CD4-positive, alpha-beta memory T cell (primary cell): ENCODE measurements at regions of chr2 and their contacts with region 1.

Region 1: GRCh38 chr2:189762551-189763298 is at the start of gene OSGEPL1:
- DNase-seq: peak; percentile 89 to 98 (median 91)
- H3K4me3 ChIP-seq: peak within 1 kb of the TSS; percentile 87 to 94
- H3K4me3 Mint-ChIP-seq: peak within 1 kb of the TSS; percentile 90 to 99 (median 95)
- H3K27ac ChIP-seq: peak within 1 kb of the TSS; percentile 88
- H3K27ac Mint-ChIP-seq: peak within 1 kb of the TSS; percentile 95 to 99 (median 97)
- H3K4me1 ChIP-seq: peaks cover 13% of the 10 kb centered on the region
- H3K4me1 Mint-ChIP-seq: peaks cover 4 to 15% (median 5%) of the 10 kb centered on the region in 4 donors
- H3K27me3 ChIP-seq: no peaks in the 10 kb centered on the region
- H3K27me3 Mint-ChIP-seq: no peaks in the 10 kb centered on the region
- total RNA-seq, gene OSGEPL1: 19.1 TPM

Region 2: GRCh38 chr2:189440947-189441708 is 321.6 kb before region 1 on chr2 and contains the start of gene WDR75:
- CTCF ChIA-PET with region 1: interaction called, 7 read pairs
- POLR2A ChIA-PET with region 1: interaction called, 10 read pairs
- intact Hi-C with region 1: loop called (anchors 1 kb)
- DNase-seq: peak; percentile 93 to 96 (median 95)
- H3K4me3 ChIP-seq: peak within 1 kb of the TSS; percentile 87 to 99
- H3K4me3 Mint-ChIP-seq: peak within 1 kb of the TSS in 6 of 8 donors; percentile 98 to 100 (median 100)
- H3K27ac ChIP-seq: peak within 1 kb of the TSS; percentile 89
- H3K27ac Mint-ChIP-seq: peak within 1 kb of the TSS; percentile 97 to 100 (median 100)
- H3K4me1 ChIP-seq: peaks cover 49% of the 10 kb centered on the region
- H3K4me1 Mint-ChIP-seq: peaks cover 0 to 18% (median 11%) of the 10 kb centered on the region in 4 donors
- H3K27me3 ChIP-seq: no peaks in the 10 kb centered on the region
- H3K27me3 Mint-ChIP-seq: no peaks in the 10 kb centered on the region
- total RNA-seq, gene WDR75: 60.8 to 61.4 TPM

Region 3: DNA sequence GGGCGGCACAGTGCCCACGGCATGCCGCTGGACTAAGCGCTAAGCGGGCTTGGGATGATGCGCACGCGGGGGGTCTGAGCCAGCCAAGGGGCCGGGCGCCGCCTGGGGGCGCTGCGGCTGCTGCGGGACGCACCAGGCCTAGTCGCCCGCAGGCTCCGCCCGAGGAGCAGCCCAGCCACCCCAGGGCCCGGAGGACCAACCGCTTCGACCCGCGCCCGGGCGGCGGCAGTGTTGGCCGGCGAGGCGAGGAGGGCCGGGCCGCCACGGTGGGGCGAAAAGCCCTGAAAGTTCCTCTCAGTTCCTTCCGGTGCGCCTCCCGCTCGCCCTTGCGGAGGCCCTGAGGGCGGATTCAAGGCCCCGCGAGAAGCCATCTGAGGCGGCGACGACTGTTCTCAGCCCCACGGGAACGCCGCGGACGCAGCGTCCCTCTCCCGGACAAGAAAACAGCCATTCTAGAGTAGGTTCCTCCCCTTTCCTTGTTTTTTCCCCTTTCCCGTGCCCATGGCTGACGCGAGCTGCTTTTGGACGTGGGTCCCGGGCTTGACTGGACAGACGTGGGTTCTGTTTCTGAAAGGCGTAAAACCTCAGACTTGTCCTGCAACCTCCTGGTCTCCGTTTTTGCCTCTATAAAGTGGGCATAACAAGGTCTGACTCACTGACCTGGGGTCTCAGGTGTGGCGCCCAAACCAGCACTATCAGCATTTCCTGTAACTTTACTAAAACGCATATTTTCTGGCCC is 88.2 kb before region 1 on chr2 and contains the start of gene ANKAR:
- CTCF ChIA-PET with region 1: interaction called, 9 read pairs
- POLR2A ChIA-PET with region 1: interaction called, 13 read pairs
- intact Hi-C with region 1: no loop called
- DNase-seq: peak; percentile 80 to 86 (median 83)
- H3K4me3 ChIP-seq: peak within 1 kb of the TSS; percentile 42 to 77
- H3K4me3 Mint-ChIP-seq: peak within 1 kb of the TSS; percentile 95 to 98 (median 96)
- H3K27ac ChIP-seq: peak within 1 kb of the TSS; percentile 90
- H3K27ac Mint-ChIP-seq: peak within 1 kb of the TSS; percentile 96 to 99 (median 99)
- H3K4me1 ChIP-seq: peaks cover 21% of the 10 kb centered on the region
- H3K4me1 Mint-ChIP-seq: peaks cover 27 to 49% (median 40%) of the 10 kb centered on the region in 4 donors
- H3K27me3 ChIP-seq: no peaks in the 10 kb centered on the region
- H3K27me3 Mint-ChIP-seq: no peaks in the 10 kb centered on the region
- total RNA-seq, gene ANKAR: 18.4 to 20.2 TPM

Region 4: DNA sequence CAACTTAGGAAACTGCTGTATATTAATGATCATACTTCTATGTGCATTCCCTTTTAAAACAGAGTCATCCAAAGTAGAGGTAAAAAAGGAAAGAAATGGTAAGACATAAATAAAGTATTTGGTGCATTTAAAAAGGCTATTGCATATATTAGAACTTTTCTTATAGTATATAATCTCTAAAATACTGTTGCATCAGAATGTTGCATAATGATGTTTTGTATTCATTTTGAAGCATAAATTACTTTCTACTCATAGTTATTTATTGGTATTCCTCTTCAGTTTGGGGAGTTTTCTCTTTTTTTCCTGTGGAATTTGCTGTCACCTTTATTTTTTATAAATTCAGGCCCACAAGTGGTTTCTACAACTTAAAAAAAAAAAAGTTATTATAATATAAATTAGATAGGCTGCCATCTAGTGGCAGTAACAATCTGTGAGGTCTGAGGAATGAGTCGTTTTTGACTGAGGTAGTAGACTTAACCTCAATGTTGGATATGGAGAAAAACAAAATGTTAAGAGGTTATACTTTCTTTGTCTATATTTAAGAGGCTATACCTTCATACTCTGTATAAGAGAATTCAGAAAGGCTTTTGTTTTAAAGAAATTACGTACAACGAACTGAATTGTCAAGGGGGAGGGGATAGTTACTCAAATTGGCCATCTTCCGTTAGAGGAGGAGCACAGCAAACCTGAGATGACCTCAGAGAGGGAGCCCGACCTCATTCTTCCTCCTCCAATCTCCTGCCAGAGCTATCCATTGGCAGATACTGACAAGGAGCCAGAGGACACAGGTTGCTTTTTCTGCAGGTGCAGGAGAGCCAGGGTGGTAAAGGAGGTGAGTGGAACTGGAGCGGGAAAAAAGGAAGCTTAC is 64.5 kb before region 1 on chr2:
- CTCF ChIA-PET with region 1: interaction called, 9 read pairs
- POLR2A ChIA-PET with region 1: no interaction called
- intact Hi-C with region 1: loop called (anchors 5 kb)
- DNase-seq: peak; percentile 40 to 50 (median 48)
- H3K4me3 ChIP-seq: no peak overlapping the region
- H3K4me3 Mint-ChIP-seq: no peak overlapping the region
- H3K27ac ChIP-seq: no peak overlapping the region
- H3K27ac Mint-ChIP-seq: peak overlapping the region in 2 of 7 donors; percentile 3 to 36
- H3K4me1 ChIP-seq: no peaks in the 10 kb centered on the region
- H3K4me1 Mint-ChIP-seq: no peaks in the 10 kb centered on the region
- H3K27me3 ChIP-seq: no peaks in the 10 kb centered on the region
- H3K27me3 Mint-ChIP-seq: no peaks in the 10 kb centered on the region

Region 5: DNA sequence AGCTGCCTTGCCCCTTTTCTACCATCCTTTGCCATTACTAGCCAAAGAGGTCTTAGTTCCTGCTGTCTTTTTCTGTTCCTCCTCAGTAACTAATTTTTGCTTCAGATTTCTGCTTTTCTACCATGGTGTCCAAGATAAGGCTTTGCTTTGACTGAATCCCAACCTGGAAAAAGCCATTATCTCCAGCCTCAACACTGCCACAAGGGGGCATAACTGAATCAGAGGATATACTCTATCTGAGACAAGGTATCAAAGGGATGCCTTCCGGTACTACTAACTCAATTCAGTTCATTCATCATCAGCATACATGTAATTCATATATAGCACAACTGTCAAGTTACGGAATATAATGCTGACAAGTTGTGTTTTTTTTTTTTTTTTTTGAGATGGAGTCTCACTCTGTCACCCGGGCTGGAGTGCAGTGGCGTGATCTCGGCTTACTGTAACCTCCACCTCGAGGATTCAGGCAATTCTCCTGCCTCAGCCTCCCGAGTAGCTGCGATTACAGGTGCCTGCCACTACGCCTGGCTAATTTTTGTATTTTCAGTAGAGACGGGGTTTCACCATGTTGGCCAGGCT is 11.6 kb before region 1 on chr2:
- CTCF ChIA-PET with region 1: interaction called, 83 read pairs
- POLR2A ChIA-PET with region 1: interaction called, 8 read pairs
- intact Hi-C with region 1: loop called (anchors 1 kb)
- DNase-seq: peak; percentile 36 to 49 (median 43)
- H3K4me3 ChIP-seq: no peak overlapping the region
- H3K4me3 Mint-ChIP-seq: no peak overlapping the region
- H3K27ac ChIP-seq: no peak overlapping the region
- H3K27ac Mint-ChIP-seq: peak overlapping the region in 3 of 7 donors; percentile 19 to 89 (median 59)
- H3K4me1 ChIP-seq: no peaks in the 10 kb centered on the region
- H3K4me1 Mint-ChIP-seq: peaks cover 0 to 1% (median 0%) of the 10 kb centered on the region in 4 donors
- H3K27me3 ChIP-seq: no peaks in the 10 kb centered on the region
- H3K27me3 Mint-ChIP-seq: no peaks in the 10 kb centered on the region

Region 6: DNA sequence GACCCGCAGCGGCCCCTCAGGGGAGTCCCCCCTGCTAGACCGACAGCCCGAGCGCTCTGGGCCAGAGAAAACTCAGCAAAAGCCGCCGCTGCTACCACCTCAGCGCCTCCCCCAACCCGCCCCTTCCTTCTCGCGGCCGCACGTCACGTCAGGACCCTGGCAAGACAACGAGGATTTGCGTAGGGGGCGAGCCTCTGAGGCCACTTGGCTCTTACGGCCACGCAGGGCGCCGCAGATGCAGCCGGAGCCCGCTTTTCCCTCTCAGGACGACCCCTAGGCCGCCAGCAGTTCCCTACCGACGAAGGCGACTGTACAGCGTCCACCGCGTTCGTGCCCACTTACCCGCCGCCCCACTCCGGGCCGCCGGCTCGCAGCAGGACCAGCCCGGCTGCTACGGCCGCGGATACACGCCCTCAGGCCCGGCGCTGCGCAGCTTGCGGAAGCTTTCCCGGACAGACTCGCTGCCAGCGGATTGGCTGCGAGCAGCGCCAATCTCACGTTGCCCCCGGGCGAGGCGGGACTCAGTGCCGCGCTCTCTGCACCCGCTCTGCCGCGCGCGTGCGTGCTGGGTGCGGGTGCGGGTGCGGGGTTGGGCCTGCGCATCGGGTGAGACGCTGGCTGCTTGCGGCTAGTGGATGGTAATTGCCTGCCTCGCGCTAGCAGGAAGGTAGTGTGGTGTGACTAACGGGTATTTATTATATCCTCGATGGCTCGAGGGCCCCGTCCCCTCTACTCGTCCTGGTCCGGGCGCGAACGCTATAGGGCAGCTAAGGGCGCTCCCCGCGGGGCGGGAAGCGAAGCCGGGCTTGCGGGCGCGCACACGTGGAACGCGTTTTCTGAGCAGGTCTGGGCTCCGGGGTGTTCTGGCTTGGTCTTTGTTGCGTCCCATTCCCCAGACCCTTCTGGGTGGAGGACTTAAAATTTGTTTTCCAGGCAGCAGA is 21.5 kb after region 1 on chr2 and contains the starts of genes ORMDL1 and PMS1:
- CTCF ChIA-PET with region 1: interaction called, 23 read pairs
- POLR2A ChIA-PET with region 1: interaction called, 95 read pairs
- intact Hi-C with region 1: loop called (anchors 1 kb)
- DNase-seq: peak; percentile 93 to 96 (median 96)
- H3K4me3 ChIP-seq: peak within 1 kb of the TSS; percentile 71 to 74
- H3K4me3 Mint-ChIP-seq: peak within 1 kb of the TSS; percentile 92 to 97 (median 94)
- H3K27ac ChIP-seq: peak within 1 kb of the TSS; percentile 93
- H3K27ac Mint-ChIP-seq: peak within 1 kb of the TSS; percentile 96 to 97 (median 97)
- H3K4me1 ChIP-seq: peaks cover 52% of the 10 kb centered on the region
- H3K4me1 Mint-ChIP-seq: peaks cover 43 to 64% (median 54%) of the 10 kb centered on the region in 4 donors
- H3K27me3 ChIP-seq: no peaks in the 10 kb centered on the region
- H3K27me3 Mint-ChIP-seq: no peaks in the 10 kb centered on the region
- total RNA-seq, gene ORMDL1: 187 to 190 TPM
- total RNA-seq, gene PMS1: 29.1 to 35.1 TPM

Region 7: GRCh38 chr2:189791338-189792042 is 28.8 kb after region 1 on chr2:
- CTCF ChIA-PET with region 1: interaction called, 17 read pairs
- POLR2A ChIA-PET with region 1: interaction called, 13 read pairs
- intact Hi-C with region 1: no loop called
- DNase-seq: peak; percentile 39 to 55 (median 47)
- H3K4me3 ChIP-seq: peak overlapping the region in 1 of 2 donors; percentile 49
- H3K4me3 Mint-ChIP-seq: peak overlapping the region; percentile 67 to 84 (median 80)
- H3K27ac ChIP-seq: peak overlapping the region; percentile 52
- H3K27ac Mint-ChIP-seq: peak overlapping the region; percentile 65 to 94 (median 91)
- H3K4me1 ChIP-seq: peaks cover 8% of the 10 kb centered on the region
- H3K4me1 Mint-ChIP-seq: peaks cover 13 to 25% (median 17%) of the 10 kb centered on the region in 4 donors
- H3K27me3 ChIP-seq: no peaks in the 10 kb centered on the region
- H3K27me3 Mint-ChIP-seq: no peaks in the 10 kb centered on the region